ENCODE measurements at regions of chr2 and their contacts with region 1.

Region 1: GRCh38 chr2:233267516-233268245 is 16.2 kb downstream of the ATG16L1 start:
- DNase-seq: peak; percentile 95
- ATAC-seq: peak; percentile 97
- H3K4me3 Mint-ChIP-seq: peak overlapping the region; percentile 65
- H3K27ac Mint-ChIP-seq: peak overlapping the region; percentile 92
- H3K4me1 Mint-ChIP-seq: peaks cover 70% of the 10 kb centered on the region
- H3K27me3 Mint-ChIP-seq: no peaks in the 10 kb centered on the region

Region 2: GRCh38 chr2:233297076-233297475 is 29.4 kb after region 1 on chr2:
- CTCF ChIA-PET with region 1: no interaction called
- POLR2A ChIA-PET with region 1: no interaction called
- DNase-seq: no peak
- ATAC-seq: no peak
- H3K4me3 Mint-ChIP-seq: no peak overlapping the region
- H3K27ac Mint-ChIP-seq: no peak overlapping the region
- H3K4me1 Mint-ChIP-seq: no peaks in the 10 kb centered on the region
- H3K27me3 Mint-ChIP-seq: no peaks in the 10 kb centered on the region

Region 3: GRCh38 chr2:233331536-233331935 is 63.9 kb after region 1 on chr2:
- CTCF ChIA-PET with region 1: interaction called, 10 read pairs
- POLR2A ChIA-PET with region 1: interaction called, 7 read pairs
- DNase-seq: peak; percentile 92
- ATAC-seq: peak; percentile 95
- H3K4me3 Mint-ChIP-seq: peak overlapping the region; percentile 61
- H3K27ac Mint-ChIP-seq: peak overlapping the region; percentile 99
- H3K4me1 Mint-ChIP-seq: peaks cover 60% of the 10 kb centered on the region
- H3K27me3 Mint-ChIP-seq: no peaks in the 10 kb centered on the region

Region 4: GRCh38 chr2:233369897-233370685 is 102.4 kb after region 1 on chr2:
- CTCF ChIA-PET with region 1: no interaction called
- POLR2A ChIA-PET with region 1: no interaction called
- DNase-seq: no peak
- ATAC-seq: no peak
- H3K4me3 Mint-ChIP-seq: no peak overlapping the region
- H3K27ac Mint-ChIP-seq: no peak overlapping the region
- H3K4me1 Mint-ChIP-seq: peaks cover 25% of the 10 kb centered on the region
- H3K27me3 Mint-ChIP-seq: no peaks in the 10 kb centered on the region

Region 5: GRCh38 chr2:233513953-233514655 is 246.4 kb after region 1 on chr2:
- CTCF ChIA-PET with region 1: no interaction called
- POLR2A ChIA-PET with region 1: no interaction called
- DNase-seq: no peak
- ATAC-seq: no peak
- H3K4me3 Mint-ChIP-seq: no peak overlapping the region
- H3K27ac Mint-ChIP-seq: no peak overlapping the region
- H3K4me1 Mint-ChIP-seq: peaks cover 2% of the 10 kb centered on the region
- H3K27me3 Mint-ChIP-seq: no peaks in the 10 kb centered on the region

Measured in activated CD8-positive, alpha-beta T cell treated with anti-CD3 and anti-CD28 coated beads, Interleukin-2, amount 10 ng/mL, durations not matched to agents 7 days and 5 days (primary cell).